PC-9 (cell line): ENCODE measurements at regions of chr7 and their contacts with region 1.

Region 1: GRCh38 chr7:151754142-151754590 is 122.7 kb downstream of the PRKAG2 start:
- DNase-seq: peak; percentile 93 to 97
- H3K4me3 ChIP-seq: no peak overlapping the region
- H3K27ac ChIP-seq: no peak overlapping the region
- H3K4me1 ChIP-seq: peaks cover 15% of the 10 kb centered on the region
- H3K27me3 ChIP-seq: no peaks in the 10 kb centered on the region
- CTCF ChIP-seq: peak; percentile 99

Region 2: GRCh38 chr7:151459726-151460473 is 294.3 kb before region 1 on chr7:
- CTCF ChIA-PET with region 1: no interaction called
- POLR2A ChIA-PET with region 1: no interaction called
- intact Hi-C with region 1: loop called (anchors 1 kb)
- DNase-seq: peak; percentile 86 to 97
- H3K4me3 ChIP-seq: peak overlapping the region; percentile 44; the same call in 1 of the 2 replicates
- H3K27ac ChIP-seq: peak overlapping the region; percentile 75
- H3K4me1 ChIP-seq: peaks cover 29% of the 10 kb centered on the region
- H3K27me3 ChIP-seq: no peaks in the 10 kb centered on the region
- CTCF ChIP-seq: no peak

Region 3: DNA sequence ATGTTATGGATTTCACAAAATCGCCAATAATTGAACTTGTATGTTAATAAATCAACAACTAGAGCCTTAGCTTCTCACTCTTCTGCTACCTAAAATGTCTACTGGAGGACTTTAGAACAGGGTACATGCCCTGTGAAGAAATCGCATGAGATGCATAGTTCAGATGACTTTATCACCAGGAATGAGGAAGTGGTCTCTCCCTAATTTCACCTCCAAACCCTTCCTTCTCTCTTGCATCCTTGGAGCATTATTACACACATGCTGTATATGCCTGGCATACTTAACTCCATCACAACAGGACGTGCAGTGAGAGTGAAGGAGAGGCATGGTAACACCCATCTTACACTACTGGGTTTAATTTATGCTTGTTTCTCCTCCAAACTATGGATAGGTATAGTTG is 262.3 kb before region 1 on chr7:
- CTCF ChIA-PET with region 1: no interaction called
- POLR2A ChIA-PET with region 1: no interaction called
- intact Hi-C with region 1: loop called (anchors 1 kb)
- DNase-seq: peak; percentile 58 to 99
- H3K4me3 ChIP-seq: no peak overlapping the region; the same call in 1 of the 2 replicates
- H3K27ac ChIP-seq: peak overlapping the region; percentile 86
- H3K4me1 ChIP-seq: peaks cover 65% of the 10 kb centered on the region
- H3K27me3 ChIP-seq: no peaks in the 10 kb centered on the region
- CTCF ChIP-seq: no peak

Region 4: GRCh38 chr7:151694828-151695580 is 59.2 kb before region 1 on chr7:
- CTCF ChIA-PET with region 1: interaction called, 3 read pairs
- POLR2A ChIA-PET with region 1: no interaction called
- intact Hi-C with region 1: loop called (anchors 1 kb)
- DNase-seq: peak; percentile 76 to 97
- H3K4me3 ChIP-seq: no peak overlapping the region
- H3K27ac ChIP-seq: peak overlapping the region; percentile 54
- H3K4me1 ChIP-seq: peaks cover 65% of the 10 kb centered on the region
- H3K27me3 ChIP-seq: no peaks in the 10 kb centered on the region
- CTCF ChIP-seq: no peak

Region 5: DNA sequence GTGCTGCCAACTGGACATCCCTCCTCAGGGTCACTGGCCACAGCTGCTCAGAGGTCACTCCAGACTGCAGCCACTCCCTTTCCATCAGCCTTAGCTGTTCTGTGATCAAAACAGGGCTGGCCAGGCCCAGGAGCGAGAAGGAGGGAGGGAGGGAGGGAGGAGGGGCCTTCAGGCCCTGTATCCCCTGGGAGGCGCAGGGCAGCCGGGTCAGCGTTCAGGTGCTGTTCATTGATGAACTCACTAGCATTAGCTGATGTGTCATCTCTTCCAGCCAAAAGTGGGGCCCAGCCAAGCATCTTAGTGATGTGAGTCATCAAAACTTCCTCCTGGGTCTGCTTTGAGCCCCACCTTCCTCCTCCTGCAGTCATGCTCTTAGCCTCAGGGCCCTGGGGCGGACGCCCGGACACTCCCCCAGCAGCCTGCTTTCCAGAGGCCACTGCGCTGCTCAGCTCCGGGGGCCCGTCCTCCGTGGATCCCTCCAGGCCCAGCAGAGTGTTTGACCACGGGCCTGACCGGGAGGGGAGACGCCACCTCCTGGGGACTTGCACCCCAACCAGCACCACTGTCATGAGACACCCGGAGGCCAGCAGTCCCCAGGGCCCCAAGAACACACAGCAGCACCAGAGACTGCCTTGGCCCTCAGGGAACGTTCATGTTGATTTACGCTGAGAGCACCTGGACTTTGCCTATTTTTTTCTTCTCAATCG is 26.4 kb before region 1 on chr7:
- CTCF ChIA-PET with region 1: interaction called, 3 read pairs
- POLR2A ChIA-PET with region 1: no interaction called
- intact Hi-C with region 1: loop called (anchors 1 kb)
- DNase-seq: peak; percentile 97 to 100
- H3K4me3 ChIP-seq: peak overlapping the region; percentile 39; the same call in 1 of the 2 replicates
- H3K27ac ChIP-seq: peak overlapping the region; percentile 56
- H3K4me1 ChIP-seq: peaks cover 26% of the 10 kb centered on the region
- H3K27me3 ChIP-seq: no peaks in the 10 kb centered on the region
- CTCF ChIP-seq: no peak

Region 6: GRCh38 chr7:151736403-151736909 is 17.7 kb before region 1 on chr7:
- CTCF ChIA-PET with region 1: interaction called, 3 read pairs
- POLR2A ChIA-PET with region 1: no interaction called
- intact Hi-C with region 1: loop called (anchors 1 kb)
- DNase-seq: peak; percentile 90 to 94
- H3K4me3 ChIP-seq: peak overlapping the region; percentile 26; the same call in 1 of the 2 replicates
- H3K27ac ChIP-seq: peak overlapping the region; percentile 81
- H3K4me1 ChIP-seq: peaks cover 29% of the 10 kb centered on the region
- H3K27me3 ChIP-seq: no peaks in the 10 kb centered on the region
- CTCF ChIP-seq: peak; percentile 58